Posterior vena cava (tissue), 2 donors: ENCODE measurements at regions of chr17 and their contacts with region 1.

Region 1: DNA sequence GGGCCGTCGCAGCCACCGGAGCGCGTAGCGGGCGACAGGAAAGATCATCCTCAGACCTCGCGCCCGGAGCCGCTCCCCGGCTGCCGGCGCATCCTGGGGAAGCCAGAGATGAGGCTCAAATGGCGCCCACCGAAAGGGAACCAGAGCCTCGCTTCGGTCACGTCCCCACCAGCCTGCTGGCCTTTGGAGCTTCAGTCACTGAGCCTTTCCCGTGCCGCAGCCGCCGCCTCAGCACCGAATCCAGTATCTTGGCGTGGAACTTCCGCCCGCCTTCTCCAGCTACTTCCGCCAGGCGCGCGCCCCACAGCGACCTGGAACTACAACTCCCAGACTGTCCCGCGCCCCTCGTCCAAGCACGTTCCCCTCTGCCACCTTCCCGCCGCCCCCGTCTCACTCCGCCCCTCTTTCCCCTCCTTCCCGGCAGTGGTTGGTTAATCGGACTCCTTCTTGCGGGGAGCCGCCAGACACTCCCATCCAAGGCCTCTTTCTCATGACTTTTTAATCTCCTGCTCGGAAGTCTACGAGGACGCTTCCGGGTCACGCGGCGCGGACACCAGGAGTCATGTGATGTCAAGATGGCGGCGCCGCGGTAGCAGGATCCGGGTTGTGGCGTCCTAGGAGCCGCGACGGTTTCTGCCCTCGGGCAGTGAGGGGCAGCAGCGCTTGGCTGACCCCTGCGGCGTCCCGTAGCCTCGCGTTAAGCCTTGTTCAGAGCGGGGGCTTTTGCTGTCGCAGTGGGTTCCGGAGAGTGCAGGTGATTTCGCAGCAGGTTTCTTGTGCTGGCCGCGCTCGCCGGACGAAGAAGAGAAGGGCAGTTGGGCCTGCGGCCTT is at the starts of genes SMCR8 and TOP3A:
- DNase-seq: peak; percentile 99
- total RNA-seq, gene SMCR8: 10.2 to 11.9 TPM
- total RNA-seq, gene TOP3A: 23.2 to 28.3 TPM

Region 2: GRCh38 chr17:17613708-17614114 is 701.2 kb before region 1 on chr17:
- intact Hi-C with region 1: loop called in 1 of 2 experiments (anchors 5 kb)
- DNase-seq: no peak

Region 3: GRCh38 chr17:18248300-18248731 is 66.6 kb before region 1 on chr17:
- intact Hi-C with region 1: loop called in 1 of 2 experiments (anchors 10 kb)
- DNase-seq: no peak

Region 4: DNA sequence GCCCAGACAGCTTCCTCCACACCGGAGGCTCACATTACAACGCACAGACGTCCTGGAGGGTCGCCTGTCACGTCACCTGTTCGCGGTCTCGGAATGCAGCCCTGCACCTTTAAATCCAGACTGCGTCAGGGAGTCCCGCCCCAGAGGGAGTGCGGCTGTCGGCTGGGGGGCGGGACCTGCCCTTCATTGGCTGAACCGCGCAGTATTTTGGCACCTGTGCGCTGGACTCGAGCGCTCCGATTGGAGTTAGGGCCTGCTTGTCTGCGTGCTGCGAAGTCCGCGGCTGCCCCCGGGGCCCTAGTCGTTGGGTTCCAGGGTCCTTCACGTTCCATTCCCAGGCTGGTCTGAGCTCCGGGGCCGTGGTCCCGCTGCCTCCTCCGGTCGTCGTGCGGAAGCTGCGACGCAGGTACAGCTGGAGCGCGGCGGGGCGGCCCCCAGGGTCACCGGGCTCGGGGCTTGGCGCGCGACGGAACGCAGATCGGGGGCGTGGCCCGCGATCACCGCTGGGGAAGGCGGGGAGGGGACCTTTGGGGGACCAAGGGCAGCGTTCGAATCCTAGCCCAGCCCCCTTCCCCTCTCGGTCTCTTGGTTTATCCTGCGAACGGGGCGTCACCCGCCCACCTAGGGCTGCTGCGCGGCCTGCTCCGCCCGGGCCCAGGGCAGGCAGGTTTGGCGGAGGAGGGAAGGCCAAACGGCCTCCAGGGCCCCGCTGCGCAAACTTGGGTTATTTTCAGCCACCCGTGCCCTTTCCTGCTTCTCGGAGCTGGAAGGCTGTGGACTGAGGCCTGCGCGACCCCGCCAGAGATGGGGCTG is 54.4 kb before region 1 on chr17 and contains the start of gene MIEF2:
- intact Hi-C with region 1: no loop called
- DNase-seq: peak; percentile 97
- total RNA-seq, gene MIEF2: 7.7 to 11.3 TPM